H1 (cell line): ENCODE measurements at regions of chr12 and their contacts with region 1.

Region 1: GRCh38 chr12:127559349-127560040 is 707.5 kb upstream of the TMEM132C start:
- DNase-seq: peak; percentile 39 to 72
- H3K4me3 ChIP-seq: no peak overlapping the region
- H3K27ac ChIP-seq: no peak overlapping the region
- H3K4me1 ChIP-seq: peaks cover 0 to 3% (median 0%) of the 10 kb centered on the region in 4 experiments; a peak in 1 of 7 replicates
- H3K27me3 ChIP-seq: no peaks in the 10 kb centered on the region
- CTCF ChIP-seq: peak; percentile 52 to 77 (median 73)
- EP300 ChIP-seq: no peak
- POLR2A ChIP-seq: no peak
- RAD21 ChIP-seq: peak; percentile 51 to 64

Region 2: DNA sequence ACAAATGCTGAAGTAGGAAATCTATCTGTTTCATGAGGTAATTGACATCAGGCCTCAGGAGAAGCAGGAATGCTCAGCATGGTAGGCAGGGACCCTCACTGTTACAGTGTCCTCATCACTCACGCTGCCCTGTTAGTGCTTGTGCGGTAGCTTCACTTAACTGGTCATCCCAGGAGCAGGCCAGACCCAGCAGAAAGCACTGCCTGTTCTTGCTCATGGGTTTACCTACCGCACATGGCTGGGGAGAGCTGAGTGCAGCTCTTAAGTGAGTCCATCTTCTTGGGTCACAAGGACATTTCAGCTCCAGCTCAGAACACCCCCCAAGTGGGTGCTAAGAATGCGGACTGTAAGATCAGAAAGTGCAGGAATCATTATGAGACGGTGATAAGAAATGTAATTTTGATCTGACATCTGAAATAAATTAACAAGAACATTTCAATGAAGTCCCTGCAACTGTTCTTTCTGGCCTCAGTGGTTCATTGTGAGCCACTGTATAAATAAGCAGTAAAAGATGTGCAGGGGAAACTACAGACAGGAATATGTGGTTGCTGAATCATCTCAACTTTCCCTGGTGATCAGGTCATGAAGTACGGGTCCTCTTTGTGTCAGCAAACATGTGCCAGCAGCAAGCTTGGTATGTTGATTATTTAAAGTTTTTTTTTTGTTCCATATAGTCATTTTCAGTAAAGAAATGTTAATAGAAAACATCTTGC is 50.3 kb before region 1 on chr12:
- CTCF ChIA-PET with region 1: no interaction called
- POLR2A ChIA-PET with region 1: no interaction called
- DNase-seq: no peak
- H3K4me3 ChIP-seq: no peak overlapping the region; a peak in 1 of 8 replicates
- H3K27ac ChIP-seq: no peak overlapping the region
- H3K4me1 ChIP-seq: no peaks in the 10 kb centered on the region
- H3K27me3 ChIP-seq: no peaks in the 10 kb centered on the region
- CTCF ChIP-seq: no peak
- EP300 ChIP-seq: no peak
- POLR2A ChIP-seq: no peak
- RAD21 ChIP-seq: no peak

Region 3: DNA sequence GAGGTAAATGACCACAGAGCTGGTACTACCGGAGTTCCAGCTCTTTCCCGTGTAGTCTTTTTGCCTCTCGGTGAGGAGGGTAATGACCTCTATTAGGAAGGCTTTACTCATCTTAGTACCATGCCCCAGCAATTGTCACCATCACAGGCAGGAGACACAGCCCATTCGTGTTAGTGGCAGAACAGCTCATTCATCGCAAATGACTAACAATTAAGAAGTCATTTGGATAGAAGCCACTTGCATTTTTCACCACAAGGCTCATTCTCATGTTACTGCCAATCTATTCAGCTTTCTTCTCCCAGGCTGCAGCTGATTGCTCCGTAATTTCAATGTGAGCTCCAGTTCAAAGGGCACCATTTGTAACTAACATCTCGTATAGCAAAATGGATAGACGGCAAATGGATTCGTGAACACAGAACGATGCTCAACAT is 11.4 kb before region 1 on chr12:
- CTCF ChIA-PET with region 1: interaction called, 14 read pairs
- POLR2A ChIA-PET with region 1: no interaction called
- DNase-seq: no peak
- H3K4me3 ChIP-seq: no peak overlapping the region
- H3K27ac ChIP-seq: no peak overlapping the region
- H3K4me1 ChIP-seq: peaks cover 0 to 6% (median 0%) of the 10 kb centered on the region in 4 experiments; a peak in 2 of 7 replicates
- H3K27me3 ChIP-seq: peaks cover 0 to 1% (median 0%) of the 10 kb centered on the region in 4 experiments; a peak in 1 of 7 replicates
- CTCF ChIP-seq: no peak
- EP300 ChIP-seq: no peak
- POLR2A ChIP-seq: no peak
- RAD21 ChIP-seq: no peak

Region 4: GRCh38 chr12:127570793-127571360 is 11.4 kb after region 1 on chr12:
- CTCF ChIA-PET with region 1: interaction called, 19 read pairs
- POLR2A ChIA-PET with region 1: no interaction called
- DNase-seq: no peak
- H3K4me3 ChIP-seq: no peak overlapping the region
- H3K27ac ChIP-seq: no peak overlapping the region
- H3K4me1 ChIP-seq: no peaks in the 10 kb centered on the region
- H3K27me3 ChIP-seq: no peaks in the 10 kb centered on the region
- CTCF ChIP-seq: no peak
- EP300 ChIP-seq: no peak
- POLR2A ChIP-seq: no peak
- RAD21 ChIP-seq: no peak